ENCODE measurements at regions of chr3 and their contacts with region 1.

Region 1: GRCh38 chr3:129439817-129440617 is at the starts of genes IFT122 and MBD4:
- DNase-seq: peak; percentile 100
- ATAC-seq: peak; percentile 93
- H3K4me3 ChIP-seq: peak within 1 kb of the TSS; percentile 68
- H3K27ac ChIP-seq: peak within 1 kb of the TSS; percentile 82
- H3K4me1 ChIP-seq: peaks cover 4% of the 10 kb centered on the region
- H3K27me3 ChIP-seq: no peaks in the 10 kb centered on the region
- CTCF ChIP-seq: no peak
- POLR2A ChIP-seq: peak; percentile 77
- RAD21 ChIP-seq: no peak
- total RNA-seq, gene IFT122: 27.2 and 28.0 TPM in 2 replicates
- total RNA-seq, gene MBD4: 13.8 and 22.2 TPM in 2 replicates

Region 2: DNA sequence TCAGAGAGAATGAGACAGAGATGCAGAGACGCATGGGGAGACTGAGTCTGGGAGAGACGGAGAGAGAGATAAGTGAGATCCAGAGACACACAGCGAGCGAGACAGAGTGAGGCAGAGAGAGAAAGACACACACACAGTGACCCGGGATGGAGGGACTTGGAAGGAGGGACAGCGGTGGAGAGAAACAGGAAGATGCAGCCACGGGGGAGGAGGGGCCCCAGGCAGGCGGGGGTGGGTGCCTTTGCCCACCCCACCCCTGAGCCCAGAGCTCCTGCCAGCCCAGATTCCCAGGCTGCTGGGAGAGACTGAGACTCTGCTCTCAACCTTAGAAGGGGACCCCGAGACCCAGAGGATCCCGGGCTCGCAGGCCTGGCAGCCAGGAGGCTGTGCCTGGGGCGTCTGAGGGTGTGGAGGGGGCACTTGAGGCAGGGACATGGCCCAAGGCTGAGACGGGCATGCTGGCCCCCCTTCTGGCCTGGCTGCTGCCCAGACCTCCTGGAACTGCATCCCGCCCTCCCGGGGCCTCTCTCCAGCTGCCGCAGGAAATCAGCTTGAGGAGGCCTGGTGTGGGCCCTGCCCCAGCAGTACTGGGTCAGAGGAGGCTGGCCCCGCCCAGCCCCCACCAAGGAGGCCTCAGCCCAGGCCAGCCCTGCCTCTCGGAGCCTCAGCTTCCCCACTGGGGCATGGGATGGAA is 121.0 kb after region 1 on chr3:
- CTCF ChIA-PET with region 1: no interaction called
- POLR2A ChIA-PET with region 1: no interaction called
- dilution Hi-C with region 1: no loop called
- in situ Hi-C with region 1: no loop called
- intact Hi-C with region 1: loop called (anchors 5 kb)
- DNase-seq: peak; percentile 76
- ATAC-seq: peak; percentile 80
- H3K4me3 ChIP-seq: peak overlapping the region; percentile 24; the same call in 1 of the 2 replicates
- H3K27ac ChIP-seq: peak overlapping the region; percentile 98
- H3K4me1 ChIP-seq: peaks cover 37% of the 10 kb centered on the region
- H3K27me3 ChIP-seq: no peaks in the 10 kb centered on the region
- CTCF ChIP-seq: no peak
- POLR2A ChIP-seq: no peak
- RAD21 ChIP-seq: 0 out of 2 replicates have a peak, but pooled peaks have one; percentile 9

Region 3: GRCh38 chr3:129596194-129597086 is 156.4 kb after region 1 on chr3:
- CTCF ChIA-PET with region 1: no interaction called
- POLR2A ChIA-PET with region 1: interaction called, 4 read pairs
- dilution Hi-C with region 1: no loop called
- in situ Hi-C with region 1: no loop called
- intact Hi-C with region 1: loop called (anchors 5 kb)
- DNase-seq: peak; percentile 96
- ATAC-seq: peak; percentile 83
- H3K4me3 ChIP-seq: no peak overlapping the region
- H3K27ac ChIP-seq: peak overlapping the region; percentile 87
- H3K4me1 ChIP-seq: peaks cover 55% of the 10 kb centered on the region
- H3K27me3 ChIP-seq: no peaks in the 10 kb centered on the region
- CTCF ChIP-seq: no peak
- POLR2A ChIP-seq: no peak
- RAD21 ChIP-seq: peak; percentile 39